CD4-positive, alpha-beta memory T cell (primary cell): ENCODE measurements at regions of chr13 and their contacts with region 1.

Region 1: DNA sequence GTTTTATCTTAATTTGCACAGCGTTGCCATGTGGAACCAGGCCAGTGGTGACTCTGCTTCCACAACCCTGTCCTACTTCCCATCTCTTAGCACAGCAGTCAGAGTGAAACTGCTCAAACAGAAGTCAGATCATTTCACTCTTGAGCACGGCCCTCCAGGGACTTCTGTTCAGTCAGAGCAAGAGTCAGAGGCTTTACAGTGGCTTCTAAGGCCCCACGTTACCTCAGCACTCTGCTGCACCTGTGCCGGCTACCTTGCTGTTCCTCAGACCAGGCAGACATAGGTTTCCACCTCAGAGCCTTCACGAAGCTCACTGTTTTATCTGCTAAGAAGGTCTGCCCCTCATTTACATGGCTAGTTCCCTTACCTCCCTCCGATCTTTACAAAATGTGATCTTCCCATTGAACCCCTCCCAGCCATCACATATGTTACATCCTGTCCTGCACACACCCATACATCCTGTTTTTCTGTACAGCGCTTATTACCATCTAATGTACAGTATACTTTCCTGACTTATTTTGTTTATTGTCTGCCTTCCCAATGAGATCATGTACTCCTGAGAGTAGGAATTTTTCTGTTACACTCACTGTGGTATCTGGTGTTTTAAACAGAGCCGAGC is 41.6 kb downstream of the TM9SF2 start:
- DNase-seq: peak; percentile 26 to 46 (median 42)
- H3K4me3 ChIP-seq: peak overlapping the region; percentile 12 to 47
- H3K4me3 Mint-ChIP-seq: peak overlapping the region; percentile 43 to 78 (median 72)
- H3K27ac ChIP-seq: peak overlapping the region; percentile 31
- H3K27ac Mint-ChIP-seq: peak overlapping the region; percentile 36 to 92 (median 78)
- H3K4me1 ChIP-seq: peaks cover 71% of the 10 kb centered on the region
- H3K4me1 Mint-ChIP-seq: peaks cover 38 to 73% (median 53%) of the 10 kb centered on the region in 4 donors
- H3K27me3 ChIP-seq: no peaks in the 10 kb centered on the region
- H3K27me3 Mint-ChIP-seq: no peaks in the 10 kb centered on the region

Region 2: GRCh38 chr13:99606324-99607066 is 63.6 kb after region 1 on chr13:
- CTCF ChIA-PET with region 1: interaction called, 9 read pairs
- POLR2A ChIA-PET with region 1: interaction called, 11 read pairs
- intact Hi-C with region 1: loop called (anchors 5 kb)
- DNase-seq: peak; percentile 87 to 90 (median 89)
- H3K4me3 ChIP-seq: peak within 1 kb of the TSS; percentile 53 to 78
- H3K4me3 Mint-ChIP-seq: peak within 1 kb of the TSS; percentile 88 to 97 (median 90)
- H3K27ac ChIP-seq: peak within 1 kb of the TSS; percentile 71
- H3K27ac Mint-ChIP-seq: peak within 1 kb of the TSS; percentile 91 to 96 (median 95)
- H3K4me1 ChIP-seq: peaks cover 35% of the 10 kb centered on the region
- H3K4me1 Mint-ChIP-seq: peaks cover 28 to 59% (median 46%) of the 10 kb centered on the region in 4 donors
- H3K27me3 ChIP-seq: no peaks in the 10 kb centered on the region
- H3K27me3 Mint-ChIP-seq: no peaks in the 10 kb centered on the region

Region 3: DNA sequence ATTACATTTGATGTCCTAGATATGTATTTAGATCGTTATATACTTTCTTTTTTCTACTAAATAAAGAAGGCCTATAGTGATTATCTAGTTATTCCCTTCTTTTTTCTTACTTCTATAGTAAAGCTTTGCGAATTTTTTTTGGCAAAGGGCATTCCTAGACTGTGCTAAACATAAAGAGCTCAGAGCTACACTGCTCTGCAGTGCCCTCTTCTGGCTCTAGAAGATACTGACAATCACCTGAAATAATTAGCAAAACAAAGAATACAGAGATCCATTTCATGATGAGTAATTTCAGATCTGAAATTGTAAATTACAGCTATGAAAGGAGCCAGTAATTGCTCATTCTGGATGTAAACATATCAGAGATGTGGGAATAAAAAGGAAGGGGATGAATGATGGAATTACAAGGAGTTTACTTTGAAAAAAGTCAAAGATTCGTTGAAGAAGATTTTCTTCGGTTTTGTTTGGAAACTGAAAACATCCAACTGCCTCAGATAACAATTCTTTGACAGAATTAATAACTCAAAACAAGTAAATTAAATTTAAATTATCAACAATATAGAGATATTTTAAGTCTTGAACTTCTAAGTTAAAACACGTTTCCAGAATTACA is 1585.0 kb after region 1 on chr13:
- CTCF ChIA-PET with region 1: no interaction called
- POLR2A ChIA-PET with region 1: no interaction called
- intact Hi-C with region 1: loop called (anchors 10 kb)
- DNase-seq: peak in 4 of 5 donors; percentile 17 to 41 (median 26)
- H3K4me3 ChIP-seq: no peak overlapping the region
- H3K4me3 Mint-ChIP-seq: no peak overlapping the region
- H3K27ac ChIP-seq: no peak overlapping the region
- H3K27ac Mint-ChIP-seq: no peak overlapping the region
- H3K4me1 ChIP-seq: no peaks in the 10 kb centered on the region
- H3K4me1 Mint-ChIP-seq: peaks cover 0 to 3% (median 1%) of the 10 kb centered on the region in 4 donors
- H3K27me3 ChIP-seq: no peaks in the 10 kb centered on the region
- H3K27me3 Mint-ChIP-seq: peaks cover 2 to 3% of the 10 kb centered on the region in 2 donors